Activated B cell treated with CpG ODN at 0.5 μM for 24 hours (primary cell): ENCODE measurements at regions of chr12 and their contacts with region 1.

Region 1: GRCh38 chr12:6944381-6945186 is 762 bp downstream of the C12orf57 start:
- DNase-seq: peak; percentile 80
- ATAC-seq: peak; percentile 41
- H3K4me3 Mint-ChIP-seq: peak overlapping the region; percentile 91
- H3K27ac Mint-ChIP-seq: peak overlapping the region; percentile 96
- H3K4me1 Mint-ChIP-seq: peaks cover 72% of the 10 kb centered on the region
- H3K27me3 Mint-ChIP-seq: no peaks in the 10 kb centered on the region
- CTCF ChIP-seq: peak; percentile 59

Region 2: DNA sequence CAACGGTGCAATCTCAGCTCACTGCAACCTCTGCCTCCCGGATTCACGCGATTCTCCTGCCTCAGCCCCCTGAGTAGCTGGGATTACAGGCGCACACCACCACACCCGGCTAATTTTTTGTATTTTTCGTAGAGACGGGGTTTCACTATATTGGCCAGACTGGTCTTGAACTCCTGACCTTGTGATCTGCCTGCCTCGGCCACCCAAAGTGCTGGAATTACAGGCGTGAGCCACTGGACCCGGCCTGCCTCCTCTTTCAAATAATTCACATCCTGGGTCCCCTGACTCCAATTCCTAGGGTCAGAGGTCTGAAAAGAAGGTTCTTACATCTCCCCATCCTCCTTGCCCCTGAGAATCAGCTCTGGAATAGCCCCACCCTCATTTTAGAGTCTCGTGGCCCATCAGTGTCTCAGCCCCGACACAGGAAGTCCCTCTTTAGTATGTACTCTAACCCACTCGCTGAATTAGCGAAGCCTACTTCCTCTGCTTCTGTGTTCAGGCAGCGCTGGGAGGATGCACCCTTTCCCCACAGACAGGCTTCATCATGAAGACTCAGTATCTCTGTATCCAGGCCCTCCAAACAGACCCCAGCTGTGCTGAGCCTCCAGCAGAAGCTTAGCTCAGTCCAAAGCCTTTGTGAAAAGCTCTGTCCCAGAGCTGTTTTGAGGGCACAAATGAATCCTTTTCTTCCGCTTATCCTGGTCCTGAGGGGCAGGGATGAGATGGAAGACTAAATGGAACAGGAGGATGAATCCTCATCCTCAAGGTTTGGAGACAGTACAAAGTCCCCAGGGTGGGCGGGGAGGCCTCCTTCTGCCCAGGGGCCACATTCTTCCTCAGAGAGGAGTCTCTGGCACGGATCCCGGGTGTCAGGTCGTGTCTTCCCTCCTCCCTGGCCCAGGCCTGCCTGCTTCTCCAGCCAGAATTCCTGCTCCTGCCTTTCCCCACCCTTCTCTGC is 312.3 kb before region 1 on chr12:
- CTCF ChIA-PET with region 1: no interaction called
- POLR2A ChIA-PET with region 1: interaction called, 15 read pairs
- intact Hi-C with region 1: no loop called
- DNase-seq: peak; percentile 51
- ATAC-seq: peak; percentile 53
- H3K4me3 Mint-ChIP-seq: peak overlapping the region; percentile 86
- H3K27ac Mint-ChIP-seq: peak overlapping the region; percentile 98
- H3K4me1 Mint-ChIP-seq: peaks cover 84% of the 10 kb centered on the region
- H3K27me3 Mint-ChIP-seq: no peaks in the 10 kb centered on the region
- CTCF ChIP-seq: no peak

Region 3: GRCh38 chr12:6873094-6874014 is 71.2 kb before region 1 on chr12 and contains the start of gene SPSB2:
- CTCF ChIA-PET with region 1: interaction called, 26 read pairs
- POLR2A ChIA-PET with region 1: interaction called, 87 read pairs
- intact Hi-C with region 1: loop called (anchors 1 kb)
- DNase-seq: peak; percentile 100
- ATAC-seq: peak; percentile 88
- H3K4me3 Mint-ChIP-seq: peak within 1 kb of the TSS; percentile 88
- H3K27ac Mint-ChIP-seq: peak within 1 kb of the TSS; percentile 85
- H3K4me1 Mint-ChIP-seq: peaks cover 37% of the 10 kb centered on the region
- H3K27me3 Mint-ChIP-seq: no peaks in the 10 kb centered on the region
- CTCF ChIP-seq: no peak
- total RNA-seq, gene SPSB2: 14.4 and 16.2 TPM in 2 replicates

Region 4: GRCh38 chr12:6921996-6922946 is 22.3 kb before region 1 on chr12:
- CTCF ChIA-PET with region 1: interaction called, 14 read pairs
- POLR2A ChIA-PET with region 1: interaction called, 89 read pairs
- intact Hi-C with region 1: no loop called
- DNase-seq: no peak
- ATAC-seq: peak; percentile 49
- H3K4me3 Mint-ChIP-seq: peak overlapping the region; percentile 9
- H3K27ac Mint-ChIP-seq: peak overlapping the region; percentile 78
- H3K4me1 Mint-ChIP-seq: peaks cover 50% of the 10 kb centered on the region
- H3K27me3 Mint-ChIP-seq: no peaks in the 10 kb centered on the region
- CTCF ChIP-seq: no peak

Region 5: DNA sequence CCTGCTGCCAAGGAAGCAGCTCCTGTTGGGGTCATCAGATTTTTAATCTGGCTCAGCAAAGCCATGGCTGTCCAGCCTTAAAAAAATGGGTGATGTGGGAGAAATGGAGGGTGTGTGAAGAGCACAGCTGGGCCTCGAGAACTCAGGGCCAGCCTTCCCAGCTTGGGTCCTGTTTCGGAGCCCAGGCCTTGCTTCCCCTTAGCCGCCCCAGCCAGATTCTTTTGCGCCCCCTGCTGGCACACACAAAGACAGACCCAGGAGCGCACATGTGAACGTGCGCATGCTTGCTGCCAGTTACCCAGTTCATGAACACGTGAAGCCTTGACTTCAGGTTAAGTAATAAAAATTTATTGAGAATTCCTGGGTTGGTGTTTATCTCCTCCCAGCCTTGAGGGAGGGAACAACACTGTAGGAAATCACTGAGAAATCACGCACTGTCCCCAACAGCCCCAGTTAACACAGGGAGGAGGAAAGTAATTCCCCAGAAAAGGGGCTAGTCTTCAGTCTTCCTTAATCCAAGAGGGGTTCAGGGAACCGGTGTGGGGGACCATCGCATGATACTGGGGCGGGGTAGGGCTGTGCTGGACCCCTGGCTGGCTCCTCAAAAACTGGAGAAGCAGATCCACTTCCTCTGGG is 20.6 kb after region 1 on chr12:
- CTCF ChIA-PET with region 1: interaction called, 571 read pairs
- POLR2A ChIA-PET with region 1: interaction called, 1,516 read pairs
- intact Hi-C with region 1: loop called (anchors 1 kb)
- DNase-seq: peak; percentile 76
- ATAC-seq: peak; percentile 64
- H3K4me3 Mint-ChIP-seq: peak overlapping the region; percentile 11
- H3K27ac Mint-ChIP-seq: peak overlapping the region; percentile 86
- H3K4me1 Mint-ChIP-seq: peaks cover 69% of the 10 kb centered on the region
- H3K27me3 Mint-ChIP-seq: no peaks in the 10 kb centered on the region
- CTCF ChIP-seq: no peak

Region 6: DNA sequence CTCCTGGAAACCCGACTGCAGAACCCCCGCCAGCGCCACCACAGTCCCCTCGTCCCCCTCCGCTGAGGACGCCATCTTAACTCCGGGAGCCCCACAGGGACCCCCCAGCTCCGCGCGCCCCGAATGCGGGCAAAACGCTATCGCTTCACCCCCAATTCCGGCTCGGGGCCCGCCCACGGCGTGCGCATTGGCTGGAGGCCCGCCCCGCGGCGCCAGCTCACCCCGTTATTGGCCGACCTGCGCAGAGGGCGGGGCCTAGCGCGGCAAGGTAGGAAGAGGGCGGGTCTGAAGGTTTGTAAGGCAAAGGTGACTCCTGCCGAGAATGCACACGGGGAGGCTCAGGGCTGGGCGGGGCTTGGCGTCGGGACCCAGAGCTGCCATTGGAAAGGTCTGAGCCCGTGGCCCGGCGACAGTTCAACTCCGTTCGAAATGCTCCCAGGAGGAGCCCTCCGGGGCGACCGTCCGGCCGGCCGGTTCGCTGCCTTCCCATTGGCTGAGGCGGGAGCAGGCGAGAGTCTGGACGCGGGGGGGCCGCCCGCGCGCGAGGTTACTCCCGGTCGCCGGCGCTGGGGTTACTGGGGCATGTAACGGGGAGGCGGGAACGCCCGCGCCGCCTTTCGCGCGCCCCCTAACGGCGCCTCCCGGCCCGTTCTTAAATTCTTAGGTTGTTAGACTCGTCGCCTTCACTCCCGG is 73.9 kb after region 1 on chr12 and contains the start of gene LPCAT3:
- CTCF ChIA-PET with region 1: interaction called, 8 read pairs
- POLR2A ChIA-PET with region 1: interaction called, 58 read pairs
- intact Hi-C with region 1: loop called (anchors 1 kb)
- DNase-seq: peak; percentile 94
- ATAC-seq: peak; percentile 96
- H3K4me3 Mint-ChIP-seq: peak within 1 kb of the TSS; percentile 87
- H3K27ac Mint-ChIP-seq: peak within 1 kb of the TSS; percentile 77
- H3K4me1 Mint-ChIP-seq: peaks cover 20% of the 10 kb centered on the region
- H3K27me3 Mint-ChIP-seq: no peaks in the 10 kb centered on the region
- CTCF ChIP-seq: no peak
- total RNA-seq, gene LPCAT3: 19.3 and 21.3 TPM in 2 replicates

Region 7: GRCh38 chr12:7108796-7109571 is 164.4 kb after region 1 on chr12 and contains the start of gene C1RL:
- CTCF ChIA-PET with region 1: interaction called, 18 read pairs
- POLR2A ChIA-PET with region 1: interaction called, 69 read pairs
- intact Hi-C with region 1: loop called (anchors 1 kb)
- DNase-seq: peak; percentile 83
- ATAC-seq: peak; percentile 53
- H3K4me3 Mint-ChIP-seq: peak within 1 kb of the TSS; percentile 92
- H3K27ac Mint-ChIP-seq: peak within 1 kb of the TSS; percentile 94
- H3K4me1 Mint-ChIP-seq: peaks cover 29% of the 10 kb centered on the region
- H3K27me3 Mint-ChIP-seq: no peaks in the 10 kb centered on the region
- CTCF ChIP-seq: peak; percentile 58
- total RNA-seq, gene C1RL: 13.5 and 19.2 TPM in 2 replicates